Esophagus muscularis mucosa (tissue), 4 donors: ENCODE measurements at regions of chr17 and their contacts with region 1.

Region 1: DNA sequence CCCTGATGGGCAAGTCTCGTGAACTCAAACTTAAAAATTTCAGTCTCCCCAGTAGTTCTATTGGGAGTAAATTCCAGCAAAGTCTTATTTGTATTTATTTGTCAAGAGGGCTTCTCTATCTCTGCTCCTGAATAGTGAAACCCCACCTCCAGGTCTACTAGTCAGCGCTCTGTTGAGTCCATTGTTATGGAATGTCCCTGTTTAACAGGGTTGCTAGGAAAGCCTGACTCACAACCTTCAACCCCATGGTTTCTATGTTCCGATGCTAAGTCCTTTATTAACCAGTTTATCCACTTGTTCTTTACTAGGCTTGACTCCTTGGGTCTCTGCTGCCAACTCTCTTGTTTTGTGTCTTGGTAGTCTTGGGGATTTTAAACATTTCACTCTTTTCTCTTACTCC is 250.7 kb upstream of the MYOCD start:
- DNase-seq: no peak
- H3K4me3 ChIP-seq: no peak overlapping the region
- H3K27ac ChIP-seq: peak overlapping the region; percentile 66 to 81 (median 79)
- H3K4me1 ChIP-seq: peaks cover 0 to 54% (median 31%) of the 10 kb centered on the region in 4 donors
- H3K27me3 ChIP-seq: no peaks in the 10 kb centered on the region
- CTCF ChIP-seq: no peak
- EP300 ChIP-seq: no peak
- POLR2A ChIP-seq: no peak

Region 2: GRCh38 chr17:12122075-12122474 is 293.0 kb before region 1 on chr17:
- intact Hi-C with region 1: no loop called
- DNase-seq: no peak
- H3K4me3 ChIP-seq: no peak overlapping the region
- H3K27ac ChIP-seq: no peak overlapping the region
- H3K4me1 ChIP-seq: peaks cover 0 to 4% (median 0%) of the 10 kb centered on the region in 4 donors
- H3K27me3 ChIP-seq: no peaks in the 10 kb centered on the region
- CTCF ChIP-seq: no peak
- EP300 ChIP-seq: no peak
- POLR2A ChIP-seq: no peak

Region 3: DNA sequence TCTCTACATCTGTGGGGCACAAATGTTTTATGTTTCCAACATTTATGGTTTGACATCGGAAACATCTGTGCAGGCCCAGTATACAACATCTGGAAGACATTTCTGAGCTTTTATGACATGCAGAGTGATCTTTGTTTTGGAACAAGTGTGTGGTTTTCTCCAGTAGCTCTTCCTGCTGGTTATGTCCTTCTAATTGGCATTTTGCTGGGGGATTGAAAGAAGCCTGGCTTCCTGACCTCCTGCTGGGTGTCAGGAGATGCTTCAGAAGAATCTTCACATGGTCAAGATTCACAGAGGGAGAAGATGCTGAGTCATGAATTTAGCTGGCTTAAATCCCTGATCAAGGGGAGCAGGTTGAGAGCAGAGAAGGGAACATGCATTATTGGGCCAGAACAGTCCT is 28.8 kb before region 1 on chr17:
- intact Hi-C with region 1: no loop called
- DNase-seq: peak; percentile 60
- H3K4me3 ChIP-seq: no peak overlapping the region
- H3K27ac ChIP-seq: no peak overlapping the region
- H3K4me1 ChIP-seq: peaks cover 0 to 2% (median 0%) of the 10 kb centered on the region in 4 donors
- H3K27me3 ChIP-seq: no peaks in the 10 kb centered on the region
- CTCF ChIP-seq: no peak
- EP300 ChIP-seq: no peak
- POLR2A ChIP-seq: no peak

Region 4: GRCh38 chr17:12463102-12463501 is 48.1 kb after region 1 on chr17:
- intact Hi-C with region 1: loop called (anchors 5 kb)
- DNase-seq: no peak
- H3K4me3 ChIP-seq: no peak overlapping the region
- H3K27ac ChIP-seq: peak overlapping the region; percentile 65 to 82 (median 72)
- H3K4me1 ChIP-seq: peaks cover 0 to 64% (median 36%) of the 10 kb centered on the region in 4 donors
- H3K27me3 ChIP-seq: no peaks in the 10 kb centered on the region
- CTCF ChIP-seq: no peak
- EP300 ChIP-seq: no peak
- POLR2A ChIP-seq: no peak